Activated B cell treated with CpG ODN at 0.5 μM for 24 hours (primary cell): ENCODE measurements at regions of chr10 and their contacts with region 1.

Region 1: DNA sequence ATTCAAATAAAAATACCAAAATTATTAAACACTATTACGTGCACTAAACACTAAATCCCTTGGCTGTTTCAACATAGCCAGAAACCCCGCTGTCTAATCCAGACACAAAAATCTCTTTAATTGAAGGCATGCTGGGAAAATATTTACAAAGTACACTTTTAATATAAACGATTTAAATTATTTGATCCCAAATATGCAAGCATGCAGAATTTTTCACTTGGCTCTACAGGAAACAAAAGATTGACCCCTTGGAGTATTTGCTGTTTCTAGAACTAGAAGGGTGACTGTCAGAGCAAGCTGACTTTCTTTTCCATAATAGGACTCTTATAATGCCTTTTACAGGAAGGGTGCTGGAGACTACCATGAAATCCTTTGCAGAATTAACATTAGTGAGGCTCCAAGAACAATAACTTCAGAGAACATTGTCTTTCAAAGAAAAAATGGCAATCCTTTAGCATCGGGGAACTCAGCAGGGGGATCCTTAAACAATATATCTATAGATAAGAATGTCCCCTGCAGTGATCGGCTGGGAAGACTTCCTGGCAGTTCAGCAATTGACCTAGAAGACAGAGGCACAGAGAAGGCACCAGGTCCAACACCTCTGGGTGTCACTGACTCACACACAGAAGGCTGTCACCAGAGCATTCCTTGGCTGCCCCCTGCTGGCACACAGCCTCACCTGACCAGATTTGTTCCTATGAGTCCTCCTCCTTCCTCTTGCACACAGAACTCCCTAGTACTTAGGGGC is 55.8 kb upstream of the MRLN start:
- DNase-seq: peak; percentile 41
- ATAC-seq: peak; percentile 92
- H3K4me3 Mint-ChIP-seq: no peak overlapping the region
- H3K27ac Mint-ChIP-seq: no peak overlapping the region
- H3K4me1 Mint-ChIP-seq: peaks cover 17% of the 10 kb centered on the region
- H3K27me3 Mint-ChIP-seq: no peaks in the 10 kb centered on the region
- CTCF ChIP-seq: no peak

Region 2: DNA sequence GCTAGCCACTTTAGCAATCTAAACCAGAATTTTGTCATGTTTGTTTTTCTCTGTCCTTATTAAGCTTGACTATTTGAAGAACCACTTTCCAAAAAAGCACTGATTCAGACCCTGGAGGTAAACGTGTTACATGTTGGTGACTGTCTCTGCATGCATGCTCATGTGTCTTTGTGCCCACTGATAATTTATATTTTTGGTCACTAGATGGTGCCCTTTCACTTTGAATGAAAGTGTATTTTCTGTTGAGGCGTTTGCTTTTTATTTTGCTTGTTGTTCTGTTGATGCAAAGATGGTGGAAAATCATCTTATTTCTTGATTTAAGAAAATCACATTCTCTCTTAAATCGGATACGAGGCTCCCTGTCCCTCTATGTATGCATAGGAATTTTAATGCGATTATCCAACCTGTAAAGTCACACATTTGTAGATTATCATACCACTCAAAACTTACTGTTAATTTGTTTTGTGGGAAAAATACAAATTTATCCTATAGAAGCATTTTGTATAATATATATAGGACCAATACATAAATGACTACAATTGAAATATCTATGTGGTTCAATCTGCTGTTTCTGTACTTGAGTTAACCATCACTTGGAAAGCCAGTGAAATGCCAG is 1027.1 kb before region 1 on chr10:
- CTCF ChIA-PET with region 1: no interaction called
- POLR2A ChIA-PET with region 1: no interaction called
- intact Hi-C with region 1: loop called (anchors 2 kb)
- DNase-seq: no peak
- ATAC-seq: no peak
- H3K4me3 Mint-ChIP-seq: no peak overlapping the region
- H3K27ac Mint-ChIP-seq: no peak overlapping the region
- H3K4me1 Mint-ChIP-seq: no peaks in the 10 kb centered on the region
- H3K27me3 Mint-ChIP-seq: no peaks in the 10 kb centered on the region
- CTCF ChIP-seq: no peak

Region 3: DNA sequence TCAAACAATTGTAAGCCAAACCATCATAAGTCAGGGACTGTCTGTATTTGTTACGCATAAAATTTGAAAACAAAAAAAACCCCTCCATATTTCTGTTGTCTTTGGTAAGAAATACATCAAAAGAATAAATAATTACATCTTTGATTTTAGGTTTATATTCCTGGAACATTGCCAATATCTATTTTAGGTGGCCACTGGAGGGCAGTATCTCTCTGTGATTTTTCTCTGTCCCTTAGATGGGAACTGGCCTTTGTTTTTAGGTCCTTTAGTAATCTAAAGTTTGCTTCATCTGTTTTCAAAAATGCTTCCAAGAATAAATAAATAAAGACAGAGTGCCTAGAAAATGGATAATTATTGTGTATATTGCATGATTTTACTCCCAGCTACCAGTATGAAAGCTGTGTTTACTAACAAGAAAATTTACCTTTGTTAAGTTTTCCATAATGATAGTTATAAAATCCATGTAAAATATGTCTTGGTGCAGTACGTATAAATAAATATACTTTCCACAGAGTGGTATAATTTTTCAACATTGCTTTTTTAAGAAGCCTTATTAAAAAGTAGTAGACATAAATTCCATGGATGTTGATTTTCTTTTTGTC is 568.4 kb before region 1 on chr10:
- CTCF ChIA-PET with region 1: no interaction called
- POLR2A ChIA-PET with region 1: no interaction called
- intact Hi-C with region 1: loop called (anchors 2 kb)
- DNase-seq: no peak
- ATAC-seq: no peak
- H3K4me3 Mint-ChIP-seq: no peak overlapping the region
- H3K27ac Mint-ChIP-seq: no peak overlapping the region
- H3K4me1 Mint-ChIP-seq: no peaks in the 10 kb centered on the region
- H3K27me3 Mint-ChIP-seq: peaks cover 11% of the 10 kb centered on the region
- CTCF ChIP-seq: no peak

Region 4: GRCh38 chr10:59709395-59710125 is 99.5 kb before region 1 on chr10 and contains the start of gene SLC16A9:
- CTCF ChIA-PET with region 1: no interaction called
- POLR2A ChIA-PET with region 1: no interaction called
- intact Hi-C with region 1: loop called (anchors 5 kb)
- DNase-seq: peak; percentile 33
- ATAC-seq: peak; percentile 85
- H3K4me3 Mint-ChIP-seq: peak within 1 kb of the TSS; percentile 82
- H3K27ac Mint-ChIP-seq: no peak within 1 kb of the TSS
- H3K4me1 Mint-ChIP-seq: peaks cover 6% of the 10 kb centered on the region
- H3K27me3 Mint-ChIP-seq: peaks cover 25% of the 10 kb centered on the region
- CTCF ChIP-seq: no peak
- total RNA-seq, gene SLC16A9: 0.81 and 1.2 TPM in 2 replicates

Region 5: DNA sequence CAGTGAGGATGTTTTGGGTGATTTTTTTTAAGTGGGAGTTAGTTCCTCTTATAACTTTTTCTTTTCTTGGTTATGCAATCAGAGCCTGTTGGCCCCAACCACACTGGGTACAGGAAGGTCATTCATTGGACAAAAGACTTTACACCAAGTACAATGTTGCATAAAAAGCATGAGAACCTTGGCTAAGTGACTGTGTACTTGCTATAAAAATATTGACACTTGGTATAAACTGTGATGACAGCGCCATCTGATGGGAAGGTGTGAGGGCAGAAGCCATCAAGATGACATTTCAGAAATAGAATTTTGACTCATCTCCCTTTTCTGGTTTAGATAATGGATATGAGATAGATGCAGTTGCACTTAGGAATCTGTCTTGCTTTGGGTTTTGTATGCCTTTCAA is 223.7 kb after region 1 on chr10:
- CTCF ChIA-PET with region 1: no interaction called
- POLR2A ChIA-PET with region 1: no interaction called
- intact Hi-C with region 1: loop called (anchors 5 kb)
- DNase-seq: no peak
- ATAC-seq: no peak
- H3K4me3 Mint-ChIP-seq: no peak overlapping the region
- H3K27ac Mint-ChIP-seq: no peak overlapping the region
- H3K4me1 Mint-ChIP-seq: peaks cover 14% of the 10 kb centered on the region
- H3K27me3 Mint-ChIP-seq: no peaks in the 10 kb centered on the region
- CTCF ChIP-seq: no peak